ENCODE measurements at regions of chr3 and their contacts with region 1.

Region 1: DNA sequence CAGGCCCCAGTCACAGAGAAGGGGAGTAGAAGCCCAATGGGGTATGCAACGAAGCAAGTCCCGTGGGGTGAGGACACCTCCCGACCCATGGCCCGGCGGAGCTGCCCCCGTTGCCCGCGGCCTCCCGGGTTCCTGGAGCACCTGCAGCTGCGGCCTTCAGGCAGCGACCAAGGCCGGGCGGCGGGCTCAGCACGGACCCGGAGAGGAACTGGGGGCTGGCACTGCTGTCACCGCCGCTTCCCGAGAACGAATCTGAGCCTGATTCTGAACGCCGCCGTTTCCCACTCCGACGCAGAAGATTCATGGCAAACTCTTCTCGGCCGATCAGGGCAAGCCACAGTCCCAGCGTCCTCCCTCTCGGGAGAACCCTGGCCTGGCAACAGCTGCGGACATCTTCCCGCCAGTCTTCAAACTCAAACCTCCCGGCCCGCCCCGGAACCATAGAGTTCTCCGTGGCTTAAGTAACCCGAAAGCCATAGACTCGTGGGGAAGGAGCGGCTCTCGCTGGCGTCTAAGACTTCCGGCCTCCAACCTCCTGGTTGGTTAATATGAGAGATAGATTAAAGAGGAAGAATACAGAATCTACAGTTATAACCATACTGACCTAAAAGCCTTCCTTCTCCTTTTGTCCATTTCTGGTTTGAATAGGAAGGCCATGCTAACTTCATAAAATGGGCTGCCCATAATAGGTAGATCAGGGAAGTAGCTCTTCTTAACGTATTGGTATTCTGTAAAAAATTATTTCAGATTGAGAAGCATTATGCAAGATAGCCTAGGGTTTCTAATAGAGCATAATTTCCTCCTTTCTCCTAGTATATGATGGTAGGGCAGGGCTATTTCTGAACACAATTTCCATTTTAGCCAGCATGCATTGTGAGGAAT is at the start of gene POLQ:
- DNase-seq: peak; percentile 74
- ATAC-seq: peak; percentile 91
- H3K4me3 Mint-ChIP-seq: peak within 1 kb of the TSS; percentile 90
- H3K27ac Mint-ChIP-seq: peak within 1 kb of the TSS; percentile 95
- H3K4me1 Mint-ChIP-seq: peaks cover 31% of the 10 kb centered on the region
- H3K27me3 Mint-ChIP-seq: no peaks in the 10 kb centered on the region
- CTCF ChIP-seq: no peak
- total RNA-seq, gene POLQ: 1.4 and 2.7 TPM in 2 replicates

Region 2: DNA sequence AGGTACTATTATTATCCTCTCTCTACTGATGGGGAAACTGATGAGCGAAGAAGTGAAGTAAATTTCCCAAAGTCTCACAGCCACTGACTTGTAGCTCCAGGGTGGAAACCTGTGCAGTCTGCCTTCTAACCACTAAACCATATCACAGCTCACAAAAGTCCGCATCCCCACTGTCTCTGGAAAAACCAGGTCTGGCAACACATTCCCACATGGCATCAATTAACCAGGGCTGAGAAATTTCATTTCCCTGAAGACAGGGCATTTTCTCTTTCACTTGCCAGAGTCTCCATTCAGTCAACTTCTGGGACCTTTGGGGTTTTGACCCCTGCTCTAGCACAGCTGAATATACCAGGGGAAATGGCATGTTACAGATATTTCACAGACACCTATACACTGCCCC is 73.9 kb after region 1 on chr3:
- CTCF ChIA-PET with region 1: no interaction called
- POLR2A ChIA-PET with region 1: no interaction called
- intact Hi-C with region 1: no loop called
- DNase-seq: no peak
- ATAC-seq: no peak
- H3K4me3 Mint-ChIP-seq: no peak overlapping the region
- H3K27ac Mint-ChIP-seq: no peak overlapping the region
- H3K4me1 Mint-ChIP-seq: no peaks in the 10 kb centered on the region
- H3K27me3 Mint-ChIP-seq: peaks cover 4% of the 10 kb centered on the region
- CTCF ChIP-seq: no peak

Region 3: GRCh38 chr3:121749276-121750086 is 203.7 kb after region 1 on chr3 and contains the start of gene GOLGB1:
- CTCF ChIA-PET with region 1: no interaction called
- POLR2A ChIA-PET with region 1: interaction called, 4 read pairs
- intact Hi-C with region 1: loop called (anchors 1 kb)
- DNase-seq: peak; percentile 81
- ATAC-seq: peak; percentile 93
- H3K4me3 Mint-ChIP-seq: no peak within 1 kb of the TSS
- H3K27ac Mint-ChIP-seq: no peak within 1 kb of the TSS
- H3K4me1 Mint-ChIP-seq: peaks cover 4% of the 10 kb centered on the region
- H3K27me3 Mint-ChIP-seq: no peaks in the 10 kb centered on the region
- CTCF ChIP-seq: no peak
- total RNA-seq, gene GOLGB1: 37.3 and 44.7 TPM in 2 replicates

Region 4: GRCh38 chr3:122004991-122005565 is 459.3 kb after region 1 on chr3:
- CTCF ChIA-PET with region 1: no interaction called
- POLR2A ChIA-PET with region 1: no interaction called
- intact Hi-C with region 1: loop called (anchors 2 kb)
- DNase-seq: peak; percentile 49
- ATAC-seq: peak; percentile 76
- H3K4me3 Mint-ChIP-seq: peak overlapping the region; percentile 76
- H3K27ac Mint-ChIP-seq: peak overlapping the region; percentile 91
- H3K4me1 Mint-ChIP-seq: peaks cover 65% of the 10 kb centered on the region
- H3K27me3 Mint-ChIP-seq: no peaks in the 10 kb centered on the region
- CTCF ChIP-seq: no peak

Region 5: DNA sequence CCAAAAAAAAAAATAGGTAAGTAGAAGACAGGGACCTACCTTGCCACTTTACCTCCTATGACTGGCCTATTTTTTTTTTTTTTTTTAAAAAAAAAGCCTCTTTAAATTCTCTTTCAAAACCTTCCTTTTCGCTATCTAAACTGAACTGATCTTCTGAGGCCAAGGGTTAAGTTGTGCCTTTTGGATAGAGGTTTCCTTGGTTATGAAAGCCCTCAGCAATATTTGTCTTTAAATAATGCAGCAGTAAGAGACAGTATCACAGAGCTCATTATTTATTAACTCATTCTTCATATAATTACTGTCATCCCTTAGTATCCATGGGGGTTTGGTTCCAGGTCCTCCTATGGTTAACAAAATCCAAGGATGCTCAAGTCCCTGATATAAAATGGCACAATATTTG is 828.2 kb after region 1 on chr3:
- CTCF ChIA-PET with region 1: no interaction called
- POLR2A ChIA-PET with region 1: interaction called, 10 read pairs
- intact Hi-C with region 1: no loop called
- DNase-seq: no peak
- ATAC-seq: no peak
- H3K4me3 Mint-ChIP-seq: no peak overlapping the region
- H3K27ac Mint-ChIP-seq: no peak overlapping the region
- H3K4me1 Mint-ChIP-seq: peaks cover 4% of the 10 kb centered on the region
- H3K27me3 Mint-ChIP-seq: no peaks in the 10 kb centered on the region
- CTCF ChIP-seq: no peak

Region 6: GRCh38 chr3:122564155-122564912 is 1018.5 kb after region 1 on chr3 and contains the starts of genes DTX3L and PARP9:
- CTCF ChIA-PET with region 1: no interaction called
- POLR2A ChIA-PET with region 1: no interaction called
- intact Hi-C with region 1: loop called (anchors 5 kb)
- DNase-seq: peak; percentile 67
- ATAC-seq: peak; percentile 83
- H3K4me3 Mint-ChIP-seq: peak within 1 kb of the TSS; percentile 93
- H3K27ac Mint-ChIP-seq: peak within 1 kb of the TSS; percentile 96
- H3K4me1 Mint-ChIP-seq: peaks cover 82% of the 10 kb centered on the region
- H3K27me3 Mint-ChIP-seq: no peaks in the 10 kb centered on the region
- CTCF ChIP-seq: no peak
- total RNA-seq, gene DTX3L: 73.8 and 76.5 TPM in 2 replicates
- total RNA-seq, gene PARP9: 45.9 and 50.8 TPM in 2 replicates

Region 7: DNA sequence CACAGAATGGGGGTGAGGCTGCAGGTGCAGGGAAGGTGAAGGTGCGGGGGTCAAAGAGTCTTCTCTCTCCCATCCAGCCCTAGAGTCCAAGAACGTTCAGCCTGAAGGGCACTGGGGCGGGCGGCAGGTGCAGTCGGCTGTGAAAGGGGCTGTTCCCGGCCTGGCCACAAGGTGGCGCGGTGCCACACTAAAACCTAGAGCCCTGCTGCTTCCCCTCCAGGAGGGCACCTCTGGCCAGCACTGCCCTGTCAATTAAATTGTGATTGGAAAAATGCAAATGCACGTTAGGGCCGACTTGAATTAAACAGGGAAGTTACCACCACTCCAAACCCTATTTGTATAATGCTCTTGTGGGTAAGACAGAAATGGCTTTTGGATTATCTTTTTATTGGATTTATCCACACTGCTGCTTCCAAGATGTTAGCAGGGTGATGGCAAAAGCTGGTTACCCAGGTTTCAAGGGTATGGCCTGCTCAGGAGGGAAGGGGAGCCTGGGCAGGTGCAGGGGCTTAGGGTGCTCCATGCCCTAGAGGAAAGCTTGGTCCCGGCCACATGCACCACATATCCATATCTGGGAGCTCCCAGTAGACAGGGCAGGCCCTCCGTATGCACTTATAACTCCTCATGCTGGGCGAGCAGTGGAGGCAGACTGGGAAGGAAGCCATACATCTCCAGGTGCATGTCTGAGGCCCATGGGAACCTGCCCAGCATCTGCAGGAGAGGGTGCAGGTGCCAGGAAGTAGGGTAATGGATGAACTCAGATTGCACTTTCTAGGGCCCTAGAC is 1783.2 kb after region 1 on chr3:
- CTCF ChIA-PET with region 1: no interaction called
- POLR2A ChIA-PET with region 1: no interaction called
- intact Hi-C with region 1: loop called (anchors 2 kb)
- DNase-seq: peak; percentile 69
- ATAC-seq: peak; percentile 79
- H3K4me3 Mint-ChIP-seq: no peak overlapping the region
- H3K27ac Mint-ChIP-seq: no peak overlapping the region
- H3K4me1 Mint-ChIP-seq: no peaks in the 10 kb centered on the region
- H3K27me3 Mint-ChIP-seq: peaks cover 2% of the 10 kb centered on the region
- CTCF ChIP-seq: no peak

Measured in activated B cell treated with CpG ODN at 0.5 μM for 24 hours (primary cell).